MCF 10A (cell line): ENCODE measurements at regions of chr21 and their contacts with region 1.

Region 1: DNA sequence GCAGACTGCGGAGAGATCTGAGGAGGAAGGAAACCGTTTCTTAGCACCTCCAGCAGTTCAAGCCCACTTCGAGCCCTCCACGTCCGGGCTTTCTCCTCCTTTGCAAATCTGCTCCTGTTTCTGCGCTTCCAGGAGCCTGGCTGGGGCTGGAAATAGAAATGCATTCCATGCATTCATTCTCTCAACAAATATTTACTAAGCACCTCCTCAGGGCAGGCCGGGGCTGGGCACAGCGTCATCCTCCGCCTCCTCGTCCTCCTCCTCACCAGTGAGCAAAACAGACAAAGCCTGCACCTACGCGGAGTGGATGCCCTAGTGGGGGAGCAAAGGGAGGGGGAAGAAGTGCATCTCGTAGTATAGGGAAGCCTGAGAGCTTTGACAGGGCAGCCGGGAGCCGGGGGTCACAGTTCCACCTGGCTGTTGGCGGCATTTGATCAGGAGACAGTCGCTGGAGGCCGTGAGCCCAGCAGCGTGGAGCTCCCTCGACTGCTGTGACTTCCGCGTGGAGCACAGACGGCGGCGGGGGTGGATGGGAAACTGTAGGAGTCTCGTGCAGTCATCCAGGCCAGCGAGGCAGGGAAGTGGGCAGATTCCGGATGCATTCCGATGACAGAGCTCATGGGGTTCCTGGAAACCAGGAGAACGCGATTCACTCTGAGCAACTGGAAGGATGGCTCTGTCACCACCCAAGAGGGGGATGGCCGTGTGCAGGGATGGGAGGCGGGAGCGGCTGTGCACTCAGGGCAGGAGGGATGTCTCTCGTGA is 93.5 kb downstream of the SIK1 start:
- DNase-seq: peak; percentile 77
- H3K4me3 Mint-ChIP-seq: peak overlapping the region; percentile 48
- H3K27ac Mint-ChIP-seq: peak overlapping the region; percentile 92
- H3K4me1 Mint-ChIP-seq: peaks cover 29% of the 10 kb centered on the region
- H3K27me3 Mint-ChIP-seq: no peaks in the 10 kb centered on the region
- CTCF ChIP-seq: no peak

Region 2: DNA sequence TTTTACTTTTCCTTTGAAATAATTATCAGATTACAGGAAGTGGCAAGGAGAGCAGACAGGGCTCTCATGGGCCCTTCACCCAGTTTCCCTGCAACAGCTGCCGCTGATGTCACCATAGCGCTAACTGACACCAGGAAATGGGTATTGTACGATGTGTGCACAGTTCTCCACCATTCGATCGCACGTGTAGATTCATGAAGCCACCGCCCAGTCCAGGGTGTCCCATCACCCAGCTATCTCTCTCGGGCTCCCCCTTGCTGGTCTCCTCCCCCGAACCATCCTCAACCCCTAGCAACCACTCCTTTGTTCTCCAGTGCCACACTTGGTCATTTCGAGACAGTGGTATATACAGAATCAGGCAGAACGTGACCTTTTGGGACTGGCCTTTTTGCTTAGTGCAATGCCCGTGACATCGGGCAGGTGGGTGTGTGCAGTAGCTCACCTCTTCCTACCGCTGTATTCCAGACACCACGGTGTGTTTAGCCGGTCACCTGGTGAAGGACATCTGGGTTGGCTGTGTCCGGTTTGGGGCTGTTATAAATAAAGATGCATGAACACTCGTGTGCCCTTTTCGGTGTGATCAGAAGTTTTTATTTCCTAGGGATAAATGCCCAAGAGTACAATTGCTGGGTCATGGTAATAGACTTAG is 46.2 kb before region 1 on chr21:
- CTCF ChIA-PET with region 1: no interaction called
- POLR2A ChIA-PET with region 1: no interaction called
- intact Hi-C with region 1: no loop called
- DNase-seq: no peak
- H3K4me3 Mint-ChIP-seq: no peak overlapping the region
- H3K27ac Mint-ChIP-seq: no peak overlapping the region
- H3K4me1 Mint-ChIP-seq: peaks cover 5% of the 10 kb centered on the region
- H3K27me3 Mint-ChIP-seq: no peaks in the 10 kb centered on the region
- CTCF ChIP-seq: no peak

Region 3: GRCh38 chr21:43306911-43307676 is 26.4 kb before region 1 on chr21:
- CTCF ChIA-PET with region 1: no interaction called
- POLR2A ChIA-PET with region 1: interaction called, 11 read pairs
- intact Hi-C with region 1: no loop called
- DNase-seq: peak; percentile 92
- H3K4me3 Mint-ChIP-seq: peak overlapping the region; percentile 41
- H3K27ac Mint-ChIP-seq: peak overlapping the region; percentile 99
- H3K4me1 Mint-ChIP-seq: peaks cover 41% of the 10 kb centered on the region
- H3K27me3 Mint-ChIP-seq: no peaks in the 10 kb centered on the region
- CTCF ChIP-seq: no peak

Region 4: GRCh38 chr21:43348801-43349261 is 15.4 kb after region 1 on chr21:
- CTCF ChIA-PET with region 1: no interaction called
- POLR2A ChIA-PET with region 1: no interaction called
- intact Hi-C with region 1: no loop called
- DNase-seq: peak; percentile 26
- H3K4me3 Mint-ChIP-seq: no peak overlapping the region
- H3K27ac Mint-ChIP-seq: no peak overlapping the region
- H3K4me1 Mint-ChIP-seq: peaks cover 4% of the 10 kb centered on the region
- H3K27me3 Mint-ChIP-seq: no peaks in the 10 kb centered on the region
- CTCF ChIP-seq: no peak